Panc1 (cell line): ENCODE measurements at regions of chr10 and their contacts with region 1.

Region 1: GRCh38 chr10:114631666-114632417 is 26.2 kb downstream of the ABLIM1 start:
- DNase-seq: no peak
- ATAC-seq: peak; percentile 36
- H3K4me3 ChIP-seq: peak overlapping the region; percentile 73 to 78
- H3K27ac ChIP-seq: peak overlapping the region; percentile 96
- H3K4me1 ChIP-seq: peaks cover 83% of the 10 kb centered on the region
- H3K27me3 ChIP-seq: no peaks in the 10 kb centered on the region
- CTCF ChIP-seq: no peak

Region 2: GRCh38 chr10:114526504-114527238 is 105.2 kb before region 1 on chr10:
- CTCF ChIA-PET with region 1: no interaction called
- POLR2A ChIA-PET with region 1: interaction called, 12 read pairs
- in situ Hi-C with region 1: no loop called
- intact Hi-C with region 1: no loop called
- DNase-seq: no peak
- ATAC-seq: peak; percentile 95
- H3K4me3 ChIP-seq: peak overlapping the region; percentile 33 to 46
- H3K27ac ChIP-seq: peak overlapping the region; percentile 79
- H3K4me1 ChIP-seq: peaks cover 51% of the 10 kb centered on the region
- H3K27me3 ChIP-seq: no peaks in the 10 kb centered on the region
- CTCF ChIP-seq: no peak

Region 3: DNA sequence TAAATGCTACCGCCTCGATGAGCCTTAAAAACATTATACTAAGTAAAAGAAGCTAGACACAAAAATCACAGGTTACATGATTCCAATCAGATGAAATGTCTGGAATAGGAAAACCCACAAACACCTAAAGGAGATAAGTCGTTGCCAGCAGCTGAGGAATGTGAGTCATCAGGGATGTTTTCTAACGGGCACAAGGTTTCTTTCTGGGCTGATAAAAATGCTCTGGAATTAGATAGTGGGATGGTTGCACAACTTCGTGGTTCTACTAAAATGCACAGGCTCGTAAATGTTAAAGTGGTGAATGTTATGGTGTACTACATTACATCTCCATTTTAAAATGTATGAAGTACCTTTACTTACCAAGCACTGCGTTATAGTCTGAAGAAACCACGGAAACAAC is 16.5 kb after region 1 on chr10:
- CTCF ChIA-PET with region 1: no interaction called
- POLR2A ChIA-PET with region 1: interaction called, 19 read pairs
- in situ Hi-C with region 1: no loop called
- intact Hi-C with region 1: no loop called
- DNase-seq: no peak
- ATAC-seq: peak; percentile 76
- H3K4me3 ChIP-seq: peak overlapping the region in 1 of 2 experiments; percentile 39; a peak in 2 of 4 replicates
- H3K27ac ChIP-seq: peak overlapping the region; percentile 100
- H3K4me1 ChIP-seq: peaks cover 89% of the 10 kb centered on the region
- H3K27me3 ChIP-seq: no peaks in the 10 kb centered on the region
- CTCF ChIP-seq: no peak

Region 4: GRCh38 chr10:114714281-114714741 is 82.5 kb after region 1 on chr10:
- CTCF ChIA-PET with region 1: no interaction called
- POLR2A ChIA-PET with region 1: interaction called, 16 read pairs
- in situ Hi-C with region 1: no loop called
- intact Hi-C with region 1: no loop called
- DNase-seq: peak; percentile 93
- ATAC-seq: peak; percentile 86
- H3K4me3 ChIP-seq: peak overlapping the region in 1 of 2 experiments; percentile 38; a peak in 2 of 4 replicates
- H3K27ac ChIP-seq: peak overlapping the region; percentile 100
- H3K4me1 ChIP-seq: peaks cover 94% of the 10 kb centered on the region
- H3K27me3 ChIP-seq: no peaks in the 10 kb centered on the region
- CTCF ChIP-seq: no peak

Region 5: DNA sequence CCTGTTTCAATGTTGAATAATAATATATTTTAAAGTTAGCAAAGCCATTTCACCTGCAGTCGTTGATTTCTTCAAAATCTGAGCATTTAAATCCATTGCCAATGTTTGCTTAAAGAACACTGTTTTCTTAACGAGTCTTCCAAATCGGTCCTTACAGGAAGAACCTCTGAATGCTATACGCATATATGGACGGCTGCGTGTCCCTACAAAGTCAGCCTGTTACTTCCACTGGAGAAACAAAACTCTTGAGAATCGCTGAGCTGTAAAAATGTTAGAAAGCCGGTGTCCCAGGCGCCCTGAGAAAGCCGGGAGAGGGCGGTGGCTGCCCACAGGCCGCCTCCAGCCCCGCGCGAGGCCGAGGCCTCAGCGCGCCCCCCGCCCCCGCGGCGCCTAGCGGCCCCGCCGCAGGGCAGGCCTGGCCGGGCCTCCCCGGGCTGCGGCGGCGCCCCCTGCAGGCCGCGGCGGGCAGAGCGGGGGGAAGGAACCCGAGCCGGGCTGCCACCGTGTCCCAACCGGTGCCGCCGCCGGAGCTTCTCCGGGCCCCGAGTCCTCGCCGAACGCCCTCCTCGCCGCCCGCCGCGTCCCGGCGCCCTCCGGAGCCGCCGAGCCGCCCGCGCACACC is 189.6 kb after region 1 on chr10 and contains the start of gene FHIP2A:
- CTCF ChIA-PET with region 1: interaction called, 18 read pairs
- POLR2A ChIA-PET with region 1: interaction called, 6 read pairs
- in situ Hi-C with region 1: no loop called
- intact Hi-C with region 1: no loop called
- DNase-seq: peak; percentile 39
- ATAC-seq: peak; percentile 96
- H3K4me3 ChIP-seq: peak within 1 kb of the TSS; percentile 79 to 80
- H3K27ac ChIP-seq: peak within 1 kb of the TSS; percentile 94
- H3K4me1 ChIP-seq: peaks cover 42% of the 10 kb centered on the region
- H3K27me3 ChIP-seq: no peaks in the 10 kb centered on the region
- CTCF ChIP-seq: peak; percentile 100
- total RNA-seq, gene FHIP2A: 32.6 TPM

Region 6: GRCh38 chr10:114879541-114880158 is 247.8 kb after region 1 on chr10:
- CTCF ChIA-PET with region 1: no interaction called
- POLR2A ChIA-PET with region 1: no interaction called
- in situ Hi-C with region 1: no loop called
- intact Hi-C with region 1: no loop called
- DNase-seq: no peak
- ATAC-seq: peak; percentile 52; the same call in 1 of the 2 replicates
- H3K4me3 ChIP-seq: no peak overlapping the region
- H3K27ac ChIP-seq: no peak overlapping the region
- H3K4me1 ChIP-seq: peaks cover 8% of the 10 kb centered on the region
- H3K27me3 ChIP-seq: no peaks in the 10 kb centered on the region
- CTCF ChIP-seq: peak; percentile 97